Stomach (tissue), 19 donors: ENCODE measurements at regions of chr5 and their contacts with region 1.

Region 1: GRCh38 chr5:14727428-14727865 is 62.9 kb downstream of the OTULIN start:
- DNase-seq: peak; percentile 80 to 93
- H3K4me3 ChIP-seq: no peak overlapping the region
- H3K27ac ChIP-seq: no peak overlapping the region
- H3K4me1 ChIP-seq: peaks cover 0 to 16% (median 10%) of the 10 kb centered on the region in 4 donors
- H3K27me3 ChIP-seq: no peaks in the 10 kb centered on the region
- CTCF ChIP-seq: peak in 5 of 7 experiments; percentile 79 to 91 (median 89)
- EP300 ChIP-seq: no peak
- POLR2A ChIP-seq: no peak

Region 2: GRCh38 chr5:13987843-13988464 is 739.5 kb before region 1 on chr5:
- intact Hi-C with region 1: no loop called
- DNase-seq: peak; percentile 45 to 77
- H3K4me3 ChIP-seq: no peak overlapping the region
- H3K27ac ChIP-seq: no peak overlapping the region
- H3K4me1 ChIP-seq: peaks cover 0 to 7% (median 2%) of the 10 kb centered on the region in 4 donors
- H3K27me3 ChIP-seq: peaks cover 0 to 17% (median 0%) of the 10 kb centered on the region in 3 donors
- CTCF ChIP-seq: peak in 5 of 7 experiments; percentile 63 to 88 (median 82)
- EP300 ChIP-seq: no peak
- POLR2A ChIP-seq: no peak

Region 3: GRCh38 chr5:14545308-14545707 is 182.1 kb before region 1 on chr5:
- intact Hi-C with region 1: no loop called
- DNase-seq: no peak
- H3K4me3 ChIP-seq: no peak overlapping the region
- H3K27ac ChIP-seq: no peak overlapping the region
- H3K4me1 ChIP-seq: no peaks in the 10 kb centered on the region
- H3K27me3 ChIP-seq: peaks cover 0 to 6% (median 0%) of the 10 kb centered on the region in 3 donors
- CTCF ChIP-seq: no peak
- EP300 ChIP-seq: no peak
- POLR2A ChIP-seq: no peak

Region 4: DNA sequence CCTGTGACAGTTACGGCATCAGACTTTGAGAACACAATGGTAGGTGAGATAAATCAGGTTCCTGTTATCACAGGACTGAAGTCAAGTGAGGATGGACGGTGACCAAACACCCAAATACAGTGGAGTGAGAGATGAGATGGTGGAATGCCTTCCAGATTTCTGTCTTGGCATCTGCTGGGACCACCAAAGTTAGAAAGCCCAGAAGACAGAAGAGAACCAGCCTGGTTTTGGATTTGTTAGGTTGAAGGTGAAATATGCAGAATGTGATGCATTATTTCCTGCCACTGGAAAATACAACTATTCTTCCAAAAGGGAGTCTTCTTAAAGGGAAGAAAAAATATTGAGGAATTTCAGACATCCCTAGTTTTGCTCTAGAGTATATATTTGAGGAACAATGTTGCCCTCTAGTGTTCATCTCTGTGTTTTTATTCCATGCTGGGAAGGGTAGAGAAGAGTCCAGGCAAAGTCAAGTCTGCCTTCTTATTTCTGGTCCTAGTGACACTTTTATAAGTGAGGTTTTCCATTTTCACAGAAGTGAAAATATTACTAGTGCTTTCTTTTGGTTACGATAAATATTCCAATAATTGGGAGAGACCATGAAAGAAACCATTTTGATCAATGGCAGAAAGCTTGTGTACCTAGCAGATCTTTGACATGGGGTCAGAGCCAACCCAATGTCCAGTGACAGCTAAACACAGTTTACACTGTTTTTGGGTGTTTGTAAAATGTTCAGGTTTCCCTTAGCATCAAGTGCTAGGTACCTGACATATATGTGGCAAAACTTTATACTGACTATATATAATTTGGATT is 286.4 kb after region 1 on chr5:
- intact Hi-C with region 1: loop called (anchors 5 kb)
- DNase-seq: peak in 1 of 2 donors; percentile 80
- H3K4me3 ChIP-seq: no peak overlapping the region
- H3K27ac ChIP-seq: no peak overlapping the region
- H3K4me1 ChIP-seq: peaks cover 11 to 22% (median 15%) of the 10 kb centered on the region in 4 donors
- H3K27me3 ChIP-seq: no peaks in the 10 kb centered on the region
- CTCF ChIP-seq: peak in 5 of 7 experiments; percentile 32 to 74 (median 49)
- EP300 ChIP-seq: no peak
- POLR2A ChIP-seq: no peak